ENCODE measurements at regions of chr14 and their contacts with region 1.

Region 1: DNA sequence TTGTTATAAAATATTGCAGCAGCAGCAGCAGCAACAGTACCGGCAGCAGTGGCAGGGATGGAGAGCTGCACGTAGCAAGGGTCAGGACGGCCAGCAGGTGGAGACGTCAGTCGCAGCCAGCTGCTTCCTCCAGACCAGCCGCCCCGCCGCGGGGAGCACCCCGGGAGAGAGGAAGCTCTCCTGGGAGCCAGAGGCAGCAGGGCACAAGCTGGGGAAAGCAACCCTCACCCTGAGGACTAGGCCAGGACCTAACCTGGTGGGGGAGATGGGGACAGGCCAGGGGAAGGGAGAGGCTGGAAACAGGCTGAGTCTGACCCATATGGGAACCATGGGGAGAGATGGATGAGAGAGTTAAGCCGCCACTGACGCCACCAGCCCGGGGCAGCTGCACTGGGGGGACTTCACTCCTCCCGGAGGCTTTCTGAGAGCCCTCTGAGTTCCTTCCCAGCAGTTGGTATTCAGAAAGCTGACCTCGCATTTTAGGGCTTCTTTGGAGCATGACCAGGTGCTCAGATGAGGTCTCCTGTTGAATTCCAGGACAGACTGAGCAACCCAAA is 56.3 kb downstream of the SPTB start:
- DNase-seq: peak; percentile 22 to 84
- H3K4me3 ChIP-seq: peak overlapping the region; percentile 13 to 43
- H3K27ac ChIP-seq: no peak overlapping the region
- H3K4me1 ChIP-seq: peaks cover 0 to 9% of the 10 kb centered on the region in 2 donors
- H3K27me3 ChIP-seq: no peaks in the 10 kb centered on the region
- CTCF ChIP-seq: peak; percentile 79 to 89 (median 85)

Region 2: GRCh38 chr14:64708148-64709004 is 115.0 kb before region 1 on chr14:
- intact Hi-C with region 1: no loop called
- DNase-seq: peak in 1 of 2 donors; percentile 76
- H3K4me3 ChIP-seq: peak overlapping the region; percentile 39 to 74
- H3K27ac ChIP-seq: peak overlapping the region; percentile 88 to 95
- H3K4me1 ChIP-seq: peaks cover 13 to 50% of the 10 kb centered on the region in 2 donors
- H3K27me3 ChIP-seq: no peaks in the 10 kb centered on the region
- CTCF ChIP-seq: no peak

Region 3: DNA sequence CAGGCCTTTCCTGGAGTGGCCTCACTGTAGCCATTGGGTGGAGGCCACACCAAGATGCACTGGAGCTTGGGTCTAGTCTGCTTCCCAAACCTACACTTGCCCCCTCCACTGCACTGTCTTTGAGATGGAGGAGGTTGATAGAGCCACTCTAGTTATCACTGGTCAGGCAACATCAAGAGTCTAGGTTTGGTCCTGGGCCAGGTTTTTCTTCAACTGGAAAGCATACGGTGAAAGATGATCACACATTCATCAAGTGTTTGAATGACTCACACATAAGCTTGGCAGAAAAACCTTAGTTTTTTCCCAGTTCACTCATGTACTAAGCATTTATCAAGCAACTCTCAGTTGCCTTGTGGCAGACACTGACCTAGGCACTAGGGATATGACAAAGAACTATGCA is 34.7 kb before region 1 on chr14:
- intact Hi-C with region 1: no loop called
- DNase-seq: no peak
- H3K4me3 ChIP-seq: no peak overlapping the region
- H3K27ac ChIP-seq: no peak overlapping the region
- H3K4me1 ChIP-seq: no peaks in the 10 kb centered on the region
- H3K27me3 ChIP-seq: no peaks in the 10 kb centered on the region
- CTCF ChIP-seq: no peak

Region 4: DNA sequence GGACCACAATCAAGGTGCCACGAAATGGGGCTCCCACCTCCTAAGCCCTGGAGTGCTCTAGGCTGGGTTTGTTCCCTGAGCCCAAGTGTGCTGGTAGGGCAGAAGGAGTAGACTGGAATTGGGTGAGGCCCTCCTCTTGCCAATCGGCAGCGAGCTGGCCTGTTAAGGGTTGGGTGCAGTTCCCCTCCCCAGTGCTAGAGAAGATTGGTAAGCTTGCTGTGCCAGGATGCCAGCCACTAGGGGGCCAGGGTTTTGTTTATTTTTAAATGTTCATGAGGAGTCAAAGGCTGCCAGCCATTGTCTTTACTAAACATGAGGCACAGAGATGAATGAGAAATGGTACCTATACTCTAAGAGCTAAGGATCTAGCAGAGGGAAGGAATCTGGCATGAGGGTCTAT is 23.4 kb before region 1 on chr14:
- intact Hi-C with region 1: loop called (anchors 2 kb)
- DNase-seq: no peak
- H3K4me3 ChIP-seq: no peak overlapping the region
- H3K27ac ChIP-seq: no peak overlapping the region
- H3K4me1 ChIP-seq: no peaks in the 10 kb centered on the region
- H3K27me3 ChIP-seq: no peaks in the 10 kb centered on the region
- CTCF ChIP-seq: peak in 2 of 3 experiments; percentile 15 to 44

Region 5: GRCh38 chr14:64879635-64880220 is 56.3 kb after region 1 on chr14 and contains the start of gene SPTB:
- intact Hi-C with region 1: loop called (anchors 5 kb)
- DNase-seq: no peak
- H3K4me3 ChIP-seq: peak within 1 kb of the TSS; percentile 65 to 69
- H3K27ac ChIP-seq: no peak within 1 kb of the TSS
- H3K4me1 ChIP-seq: peaks cover 6 to 10% of the 10 kb centered on the region in 2 donors
- H3K27me3 ChIP-seq: peaks cover 4% of the 10 kb centered on the region
- CTCF ChIP-seq: no peak
- total RNA-seq, gene SPTB: 14.9 TPM

Region 6: GRCh38 chr14:64937821-64938193 is 114.4 kb after region 1 on chr14:
- intact Hi-C with region 1: loop called (anchors 1 kb)
- DNase-seq: no peak
- H3K4me3 ChIP-seq: no peak overlapping the region
- H3K27ac ChIP-seq: no peak overlapping the region
- H3K4me1 ChIP-seq: peaks cover 0 to 9% of the 10 kb centered on the region in 2 donors
- H3K27me3 ChIP-seq: no peaks in the 10 kb centered on the region
- CTCF ChIP-seq: peak; percentile 11 to 49 (median 39)